ENCODE measurements at regions of chr7 and their contacts with region 1.

Region 1: GRCh38 chr7:155738652-155739537 is 73.4 kb downstream of the SHH start:
- DNase-seq: peak; percentile 79 to 92 (median 87)
- ATAC-seq: peak; percentile 80
- H3K4me3 ChIP-seq: no peak overlapping the region
- H3K27ac ChIP-seq: no peak overlapping the region
- H3K4me1 ChIP-seq: peaks cover 9% of the 10 kb centered on the region
- H3K27me3 ChIP-seq: no peaks in the 10 kb centered on the region
- CTCF ChIP-seq: peak; percentile 55 to 86 (median 78)
- POLR2A ChIP-seq: no peak

Region 2: GRCh38 chr7:155603205-155603857 is 135.6 kb before region 1 on chr7:
- intact Hi-C with region 1: loop called (anchors 5 kb)
- DNase-seq: no peak
- ATAC-seq: no peak
- H3K4me3 ChIP-seq: no peak overlapping the region
- H3K27ac ChIP-seq: no peak overlapping the region
- H3K4me1 ChIP-seq: peaks cover 7% of the 10 kb centered on the region
- H3K27me3 ChIP-seq: no peaks in the 10 kb centered on the region
- CTCF ChIP-seq: no peak
- POLR2A ChIP-seq: no peak

Region 3: DNA sequence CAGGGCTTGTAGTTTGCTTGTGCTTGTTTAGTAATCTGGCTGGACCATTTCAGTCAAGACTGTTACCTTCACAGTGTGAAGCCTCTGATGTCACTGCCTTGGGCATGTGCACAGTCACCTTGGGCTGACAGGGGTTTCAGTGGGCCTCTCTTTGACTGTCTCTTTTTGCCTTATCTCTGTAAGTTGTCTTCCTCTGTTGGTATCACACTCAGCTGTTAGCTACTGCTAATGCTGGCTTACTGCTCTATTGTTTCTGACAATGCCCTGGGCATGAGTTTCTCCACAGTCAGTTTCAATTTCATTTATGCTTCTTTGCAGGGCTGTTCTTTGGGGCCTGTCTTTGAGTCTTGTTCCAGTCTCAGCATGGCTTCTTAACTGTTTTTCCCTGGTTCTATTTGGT is 275.3 kb after region 1 on chr7:
- intact Hi-C with region 1: no loop called
- DNase-seq: no peak
- ATAC-seq: no peak
- H3K4me3 ChIP-seq: no peak overlapping the region
- H3K27ac ChIP-seq: no peak overlapping the region
- H3K4me1 ChIP-seq: no peaks in the 10 kb centered on the region
- H3K27me3 ChIP-seq: no peaks in the 10 kb centered on the region
- CTCF ChIP-seq: no peak
- POLR2A ChIP-seq: no peak

Region 4: DNA sequence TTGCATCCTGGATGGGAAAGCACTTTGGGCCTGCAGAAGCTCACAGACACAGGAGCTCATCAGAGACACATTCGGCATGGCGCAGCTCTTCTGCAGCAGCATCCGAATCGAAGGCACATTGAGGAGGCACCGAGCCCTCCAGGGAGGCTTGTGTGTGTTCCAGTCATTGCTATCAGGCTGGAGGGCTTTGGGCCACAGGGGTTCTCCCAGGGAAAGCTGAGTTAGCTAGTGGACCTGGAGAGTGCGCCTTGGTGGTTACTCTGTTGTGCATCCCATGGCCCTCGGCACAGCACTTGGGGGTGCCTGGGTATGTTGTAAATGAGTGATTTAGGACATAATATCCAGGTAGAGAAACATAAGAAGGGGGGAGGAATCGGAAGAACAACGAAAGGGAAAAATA is 513.0 kb after region 1 on chr7:
- intact Hi-C with region 1: no loop called
- DNase-seq: no peak
- ATAC-seq: no peak
- H3K4me3 ChIP-seq: no peak overlapping the region
- H3K27ac ChIP-seq: no peak overlapping the region
- H3K4me1 ChIP-seq: no peaks in the 10 kb centered on the region
- H3K27me3 ChIP-seq: no peaks in the 10 kb centered on the region
- CTCF ChIP-seq: no peak
- POLR2A ChIP-seq: no peak